ENCODE measurements at regions of chr19 and their contacts with region 1.

Region 1: DNA sequence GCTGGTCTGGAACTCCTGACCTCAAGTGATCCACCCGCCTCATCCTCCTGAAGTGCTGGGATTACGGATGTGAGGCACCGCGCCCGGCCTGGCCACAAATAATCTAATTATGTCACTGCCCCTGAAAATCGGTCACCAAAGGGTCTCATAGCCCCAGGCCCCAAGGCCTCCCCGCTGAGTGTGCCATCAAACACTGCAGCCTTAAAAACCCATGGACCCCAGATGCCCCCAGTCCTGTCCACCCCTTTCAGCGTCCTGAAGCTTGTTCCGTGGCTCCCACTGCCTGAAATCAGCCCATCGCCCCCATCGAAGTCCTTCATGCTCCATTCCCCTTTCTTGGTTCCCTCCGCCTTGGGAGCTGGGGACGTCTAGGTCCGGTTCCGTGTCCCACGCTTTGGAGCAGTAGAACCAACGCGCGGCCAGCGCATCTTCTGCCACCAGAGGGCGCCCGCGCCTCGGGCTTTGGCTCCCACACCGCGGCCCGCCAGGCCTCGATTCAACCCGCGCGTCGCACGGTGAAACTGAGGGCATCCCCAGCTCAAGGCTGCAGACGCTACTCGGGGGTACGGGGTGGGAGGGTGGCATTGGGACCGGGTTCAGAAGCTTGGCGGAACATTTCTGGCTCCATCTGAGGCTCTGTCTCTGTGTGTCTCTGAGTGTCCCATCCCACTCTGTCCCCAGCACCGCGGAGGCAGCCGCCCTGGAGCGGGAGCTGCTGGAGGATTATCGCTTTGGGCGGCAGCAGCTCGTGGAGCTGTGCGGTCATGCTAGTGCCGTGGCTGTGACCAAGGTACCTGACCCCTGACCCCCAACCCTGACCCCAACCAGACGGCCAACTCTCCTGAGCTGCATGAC is 3.5 kb downstream of the YJEFN3 start:
- DNase-seq: peak; percentile 91
- ATAC-seq: peak; percentile 84
- H3K4me3 ChIP-seq: no peak overlapping the region
- H3K27ac ChIP-seq: no peak overlapping the region
- H3K4me1 ChIP-seq: peaks cover 7% of the 10 kb centered on the region
- H3K27me3 ChIP-seq: no peaks in the 10 kb centered on the region
- CTCF ChIP-seq: peak; percentile 94

Region 2: DNA sequence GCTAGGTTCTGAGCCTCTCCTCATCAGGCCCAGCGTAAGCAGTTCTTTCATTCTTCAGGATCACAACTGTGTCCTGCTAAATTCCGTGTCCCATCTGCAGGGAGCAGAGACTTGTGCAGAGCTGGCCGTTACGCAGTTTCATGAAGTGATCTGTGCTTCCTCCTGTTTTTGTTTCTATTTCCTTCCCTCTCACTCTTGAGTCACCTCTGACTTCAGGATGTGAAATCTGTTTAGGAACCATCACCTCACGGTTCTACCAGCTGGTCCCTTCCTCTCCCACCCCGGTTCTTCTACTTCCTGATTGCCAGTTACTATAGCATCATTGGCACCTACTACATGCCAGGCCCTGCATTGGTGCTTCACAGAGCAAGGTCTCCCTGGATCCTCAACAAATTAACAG is 203.1 kb before region 1 on chr19:
- intact Hi-C with region 1: no loop called
- DNase-seq: no peak
- ATAC-seq: peak; percentile 62
- H3K4me3 ChIP-seq: no peak overlapping the region
- H3K27ac ChIP-seq: no peak overlapping the region
- H3K4me1 ChIP-seq: no peaks in the 10 kb centered on the region
- H3K27me3 ChIP-seq: no peaks in the 10 kb centered on the region
- CTCF ChIP-seq: no peak

Region 3: DNA sequence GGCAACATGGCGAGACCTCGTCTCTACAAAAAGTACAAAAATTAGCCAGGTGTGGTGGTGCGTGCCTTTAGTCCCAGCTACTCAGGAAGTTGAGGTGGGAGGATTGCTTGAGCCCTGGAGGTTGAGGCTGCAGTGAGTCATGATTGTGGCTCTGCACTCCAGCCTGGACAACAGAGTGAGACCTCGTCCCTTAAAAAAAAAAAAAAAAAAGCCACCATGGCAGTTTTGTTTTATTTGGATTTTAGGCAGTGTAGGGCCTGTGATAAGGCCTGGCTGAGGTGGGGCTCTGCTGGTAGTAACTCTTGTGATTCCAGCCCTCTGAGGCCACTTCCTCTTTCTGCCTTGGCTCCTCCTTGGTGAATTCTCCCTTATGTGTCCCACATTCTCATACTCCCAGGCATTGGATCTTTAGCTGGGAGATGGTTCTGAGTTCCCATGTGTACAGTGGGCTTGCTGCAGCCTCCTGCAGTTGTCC is 87.5 kb before region 1 on chr19:
- intact Hi-C with region 1: no loop called
- DNase-seq: no peak
- ATAC-seq: peak; percentile 80
- H3K4me3 ChIP-seq: no peak overlapping the region
- H3K27ac ChIP-seq: peak overlapping the region; percentile 40
- H3K4me1 ChIP-seq: peaks cover 35% of the 10 kb centered on the region
- H3K27me3 ChIP-seq: no peaks in the 10 kb centered on the region
- CTCF ChIP-seq: no peak

Region 4: GRCh38 chr19:19475849-19476828 is 56.0 kb before region 1 on chr19:
- intact Hi-C with region 1: no loop called
- DNase-seq: no peak
- ATAC-seq: peak; percentile 19
- H3K4me3 ChIP-seq: no peak overlapping the region
- H3K27ac ChIP-seq: no peak overlapping the region
- H3K4me1 ChIP-seq: peaks cover 26% of the 10 kb centered on the region
- H3K27me3 ChIP-seq: no peaks in the 10 kb centered on the region
- CTCF ChIP-seq: peak; percentile 36

Region 5: DNA sequence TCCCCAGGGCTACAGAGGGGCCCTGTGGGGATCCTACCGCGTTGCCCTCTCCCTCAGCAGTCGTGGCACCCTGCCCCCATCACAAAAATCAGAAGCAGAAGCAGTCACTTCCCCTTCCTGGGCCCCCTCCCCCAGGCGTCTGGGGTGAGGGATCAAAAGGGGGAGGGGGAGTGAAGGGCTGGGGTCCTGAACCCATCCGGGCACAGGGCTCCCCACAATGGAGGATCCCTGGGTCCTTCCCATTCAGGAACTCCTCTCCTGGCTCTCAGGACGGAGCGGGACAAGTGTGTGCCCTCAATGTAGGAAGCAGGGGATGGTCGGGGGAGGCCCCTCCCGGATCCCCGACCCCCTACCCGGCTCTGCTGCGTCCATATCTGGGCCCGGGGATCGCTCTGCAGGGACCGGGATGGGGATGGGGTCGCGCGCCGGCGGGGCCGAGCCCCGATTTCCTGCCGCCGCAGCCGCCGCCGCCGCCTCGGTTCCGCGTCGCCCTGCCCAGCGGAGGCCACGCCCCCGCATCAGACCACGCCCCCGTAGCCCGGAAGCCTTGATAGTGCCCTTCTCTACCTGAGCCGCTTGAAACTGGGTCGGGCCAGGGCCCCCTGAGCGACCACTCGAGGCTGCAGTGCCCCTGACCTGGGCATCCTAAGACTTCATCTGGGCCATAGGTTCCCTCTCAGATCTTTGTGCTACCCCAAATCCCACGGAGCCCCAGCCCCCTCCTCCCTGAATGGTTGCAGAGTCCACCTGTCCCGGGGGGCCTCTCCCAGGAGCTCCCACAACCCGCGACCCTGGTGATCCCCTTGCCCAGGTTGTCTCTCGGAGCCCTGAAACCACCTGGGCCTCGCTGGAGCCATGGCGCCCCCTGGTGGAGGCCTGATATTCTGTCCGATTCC is 111.2 kb after region 1 on chr19 and contains the start of gene GMIP:
- intact Hi-C with region 1: loop called (anchors 5 kb)
- DNase-seq: peak; percentile 92
- ATAC-seq: peak; percentile 92
- H3K4me3 ChIP-seq: peak within 1 kb of the TSS; percentile 94
- H3K27ac ChIP-seq: peak within 1 kb of the TSS; percentile 72
- H3K4me1 ChIP-seq: peaks cover 8% of the 10 kb centered on the region
- H3K27me3 ChIP-seq: no peaks in the 10 kb centered on the region
- CTCF ChIP-seq: peak; percentile 88
- total RNA-seq, gene GMIP: 37.3 TPM

Region 6: DNA sequence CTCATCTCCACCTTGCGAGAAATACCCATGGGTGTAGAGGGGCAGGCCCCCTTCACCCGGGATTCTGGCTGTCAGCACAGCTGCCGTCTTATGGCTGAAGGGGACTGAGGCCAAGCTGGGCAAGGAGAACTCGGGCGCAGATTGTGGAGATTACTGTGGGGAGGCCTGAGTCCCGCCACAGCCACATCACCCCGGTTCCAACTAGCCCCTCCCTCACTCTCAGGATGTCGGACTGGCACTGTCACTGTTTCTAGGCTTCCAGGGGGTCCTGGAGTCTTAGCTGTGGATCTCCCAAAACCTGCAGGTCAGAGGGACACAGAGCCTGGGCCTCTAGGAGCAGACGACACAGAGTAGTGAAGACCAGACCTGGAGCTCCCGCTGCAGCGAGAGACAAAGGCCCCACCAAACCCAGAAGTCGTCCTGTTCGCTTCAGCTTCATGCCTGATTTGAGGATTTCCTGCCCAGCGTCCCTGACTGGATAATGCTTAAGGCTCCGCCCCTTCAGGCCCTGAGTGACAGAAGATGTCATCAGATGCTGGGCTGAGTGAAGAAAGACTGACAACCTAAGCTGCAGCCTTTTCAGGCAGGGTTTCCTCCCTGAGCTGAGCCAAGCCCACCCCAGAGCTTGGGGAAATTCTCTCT is 424.4 kb after region 1 on chr19:
- intact Hi-C with region 1: loop called (anchors 10 kb)
- DNase-seq: no peak
- ATAC-seq: no peak
- H3K4me3 ChIP-seq: no peak overlapping the region
- H3K27ac ChIP-seq: no peak overlapping the region
- H3K4me1 ChIP-seq: no peaks in the 10 kb centered on the region
- H3K27me3 ChIP-seq: no peaks in the 10 kb centered on the region
- CTCF ChIP-seq: no peak